Mammary epithelial cell (primary cell): ENCODE measurements at regions of chr4 and their contacts with region 1.

Region 1: DNA sequence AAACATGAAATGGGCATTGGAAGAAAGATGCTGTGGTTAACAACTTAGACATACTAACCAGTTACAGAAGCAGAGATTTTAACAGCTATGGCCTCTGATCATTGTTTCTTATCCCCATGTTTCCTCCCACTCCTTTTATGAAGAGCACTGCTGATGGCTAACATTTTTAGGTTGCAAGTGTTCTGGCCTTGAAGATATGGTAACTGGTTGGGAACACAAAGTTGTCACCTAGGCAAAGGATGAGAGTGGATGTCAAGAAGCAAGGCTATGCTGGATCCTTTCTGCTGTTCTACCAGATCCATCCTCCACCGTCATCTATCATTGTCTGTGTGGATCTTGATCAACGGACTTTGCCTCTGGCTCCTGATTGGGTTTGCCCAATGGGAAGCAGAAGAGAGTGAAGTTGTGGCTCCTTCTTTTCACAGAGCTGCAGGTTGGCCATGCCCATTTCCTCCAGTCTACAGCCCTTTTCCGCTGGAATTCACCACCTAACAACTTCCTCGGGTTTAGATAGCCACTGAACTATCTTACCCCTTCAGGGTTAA is 48.9 kb upstream of the SPP1 start:
- DNase-seq: no peak
- H3K4me3 ChIP-seq: no peak overlapping the region
- H3K27ac ChIP-seq: no peak overlapping the region
- H3K4me1 ChIP-seq: no peaks in the 10 kb centered on the region
- H3K27me3 ChIP-seq: no peaks in the 10 kb centered on the region
- CTCF ChIP-seq: no peak

Region 2: GRCh38 chr4:87937523-87937922 is 10.9 kb after region 1 on chr4:
- CTCF ChIA-PET with region 1: no interaction called
- dilution Hi-C with region 1: no loop called
- in situ Hi-C with region 1: no loop called
- intact Hi-C with region 1: loop called (anchors 1 kb)
- DNase-seq: no peak
- H3K4me3 ChIP-seq: no peak overlapping the region
- H3K27ac ChIP-seq: no peak overlapping the region
- H3K4me1 ChIP-seq: no peaks in the 10 kb centered on the region
- H3K27me3 ChIP-seq: no peaks in the 10 kb centered on the region
- CTCF ChIP-seq: no peak